ENCODE measurements at regions of chr12 and their contacts with region 1.

Region 1: DNA sequence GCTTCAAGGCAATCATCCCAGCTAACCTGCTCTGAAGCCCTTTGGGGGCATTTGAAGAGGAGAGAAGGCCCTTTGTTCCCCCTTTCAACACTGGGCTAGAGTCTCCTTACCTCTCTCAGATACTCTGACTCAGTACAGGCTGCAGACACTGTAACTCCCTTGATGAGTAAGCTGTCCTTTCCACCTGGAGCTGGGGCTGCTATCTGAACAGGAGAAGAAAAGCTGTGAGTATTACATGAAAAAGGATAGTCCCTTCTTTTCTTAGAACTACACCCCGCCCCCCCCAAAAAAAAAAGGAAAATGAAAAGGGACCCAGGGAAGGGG is 186.6 kb upstream of the PLEKHG7 start:
- DNase-seq: no peak
- H3K4me3 ChIP-seq: no peak overlapping the region
- H3K27ac ChIP-seq: no peak overlapping the region
- H3K4me1 ChIP-seq: peaks cover 7% of the 10 kb centered on the region; the same call in 1 of the 2 replicates
- H3K27me3 ChIP-seq: no peaks in the 10 kb centered on the region
- CTCF ChIP-seq: no peak

Region 2: DNA sequence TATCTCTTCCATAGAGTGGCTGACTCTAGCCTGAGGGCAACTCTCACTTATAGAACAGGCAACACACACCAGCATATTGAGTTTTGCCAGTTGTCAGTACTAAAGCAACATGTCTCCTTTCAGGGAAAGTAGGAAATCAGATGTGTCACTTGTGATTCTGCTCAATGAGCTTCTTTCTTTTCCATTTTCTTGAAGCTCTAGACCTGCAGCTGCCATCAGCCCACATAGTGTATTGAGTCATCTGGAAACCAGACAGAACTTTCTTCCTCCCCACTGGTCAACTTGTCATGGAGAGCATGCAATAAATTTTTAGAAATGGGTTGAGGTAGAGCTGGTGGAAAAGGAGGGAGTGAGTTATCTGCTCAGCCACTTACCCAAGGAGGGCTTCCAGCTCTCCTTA is 22.4 kb before region 1 on chr12:
- CTCF ChIA-PET with region 1: no interaction called
- POLR2A ChIA-PET with region 1: interaction called, 20 read pairs
- intact Hi-C with region 1: no loop called
- DNase-seq: no peak
- H3K4me3 ChIP-seq: no peak overlapping the region
- H3K27ac ChIP-seq: no peak overlapping the region
- H3K4me1 ChIP-seq: peaks cover 5% of the 10 kb centered on the region; the same call in 1 of the 2 replicates
- H3K27me3 ChIP-seq: no peaks in the 10 kb centered on the region
- CTCF ChIP-seq: no peak

Region 3: DNA sequence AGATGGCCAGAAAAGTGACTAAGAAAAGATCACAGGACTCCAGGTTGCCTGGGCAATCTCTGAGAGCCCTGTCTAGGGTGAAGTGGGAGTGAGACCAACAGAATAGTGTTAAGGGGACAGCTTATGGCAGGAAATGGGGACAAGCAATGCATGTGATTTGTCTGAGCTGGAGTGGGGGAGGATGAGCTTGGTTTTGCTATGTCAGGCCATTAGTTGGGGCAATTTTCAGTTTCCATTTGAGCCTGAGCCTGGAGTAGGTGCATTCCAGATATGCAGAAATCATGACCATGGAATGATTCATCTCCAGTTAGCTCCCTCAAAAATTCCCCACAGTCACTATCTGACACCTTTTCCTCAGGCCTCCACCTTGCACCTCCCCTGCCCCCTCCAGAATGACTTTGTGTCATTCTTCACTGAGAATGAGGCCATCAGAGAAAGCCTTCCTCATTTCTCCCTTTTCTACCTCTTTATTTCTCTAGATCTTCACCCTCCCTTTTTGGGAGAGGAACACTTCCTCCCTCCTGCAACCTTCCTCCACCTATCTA is 35.7 kb after region 1 on chr12:
- CTCF ChIA-PET with region 1: no interaction called
- POLR2A ChIA-PET with region 1: no interaction called
- intact Hi-C with region 1: no loop called
- DNase-seq: peak; percentile 55 to 75
- H3K4me3 ChIP-seq: no peak overlapping the region
- H3K27ac ChIP-seq: peak overlapping the region; percentile 73
- H3K4me1 ChIP-seq: peaks cover 19% of the 10 kb centered on the region
- H3K27me3 ChIP-seq: no peaks in the 10 kb centered on the region
- CTCF ChIP-seq: no peak